ENCODE measurements at regions of chr7 and their contacts with region 1.

Region 1: GRCh38 chr7:98034081-98035035 is 44.4 kb upstream of the OCM2 start:
- DNase-seq: peak in 1 of 2 donors; percentile 24
- H3K4me3 ChIP-seq: peak overlapping the region in 1 of 3 donors; percentile 8
- H3K27ac ChIP-seq: no peak overlapping the region
- H3K4me1 ChIP-seq: no peaks in the 10 kb centered on the region
- H3K27me3 ChIP-seq: no peaks in the 10 kb centered on the region
- CTCF ChIP-seq: no peak
- POLR2A ChIP-seq: no peak

Region 2: DNA sequence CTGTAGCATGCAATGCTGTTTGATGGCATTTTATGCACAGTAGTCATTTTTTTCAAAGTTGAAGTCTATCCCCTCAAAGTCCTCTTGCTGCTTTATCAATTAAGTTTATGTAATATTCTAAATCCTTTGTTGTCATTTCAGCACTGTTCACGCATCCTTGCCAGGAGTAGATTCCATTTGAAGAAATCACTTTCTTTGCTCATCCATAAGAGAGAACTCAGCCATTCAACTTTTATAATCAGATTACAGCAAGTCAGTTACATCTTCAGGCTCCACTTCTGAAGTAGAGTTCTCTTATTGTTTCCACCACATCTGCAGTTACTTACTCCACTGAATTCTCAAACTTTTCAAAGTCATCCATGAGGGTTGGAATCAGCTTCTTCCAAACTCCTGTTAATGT is 884.5 kb before region 1 on chr7:
- intact Hi-C with region 1: loop called (anchors 5 kb)
- DNase-seq: no peak
- H3K4me3 ChIP-seq: no peak overlapping the region
- H3K27ac ChIP-seq: no peak overlapping the region
- H3K4me1 ChIP-seq: no peaks in the 10 kb centered on the region
- H3K27me3 ChIP-seq: no peaks in the 10 kb centered on the region
- CTCF ChIP-seq: no peak
- POLR2A ChIP-seq: no peak

Region 3: DNA sequence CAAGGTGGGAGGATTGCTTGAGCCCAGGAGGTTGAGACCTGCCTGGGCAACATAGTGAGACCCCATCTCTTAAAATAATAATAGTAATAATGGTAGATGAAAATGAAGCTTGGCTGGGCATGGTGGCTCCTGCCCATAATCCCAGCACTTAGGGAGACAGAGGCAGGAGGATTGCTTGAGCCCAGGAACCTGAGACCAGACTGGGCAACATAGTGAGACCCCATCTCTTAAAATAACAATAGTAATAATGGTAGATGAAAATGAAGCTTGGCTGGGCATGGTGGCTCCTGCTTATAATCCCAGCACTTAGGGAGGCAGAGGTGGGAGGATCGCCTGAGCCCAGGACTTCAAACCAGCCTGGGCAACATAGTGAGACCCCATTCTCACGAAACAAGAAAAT is 22.8 kb after region 1 on chr7:
- intact Hi-C with region 1: loop called (anchors 1 kb)
- DNase-seq: no peak
- H3K4me3 ChIP-seq: no peak overlapping the region
- H3K27ac ChIP-seq: peak overlapping the region in 1 of 2 donors; percentile 33
- H3K4me1 ChIP-seq: no peaks in the 10 kb centered on the region
- H3K27me3 ChIP-seq: no peaks in the 10 kb centered on the region
- CTCF ChIP-seq: no peak
- POLR2A ChIP-seq: no peak